Posterior cingulate gyrus (tissue), 11 donors: ENCODE measurements at regions of chr11 and their contacts with region 1.

Region 1: DNA sequence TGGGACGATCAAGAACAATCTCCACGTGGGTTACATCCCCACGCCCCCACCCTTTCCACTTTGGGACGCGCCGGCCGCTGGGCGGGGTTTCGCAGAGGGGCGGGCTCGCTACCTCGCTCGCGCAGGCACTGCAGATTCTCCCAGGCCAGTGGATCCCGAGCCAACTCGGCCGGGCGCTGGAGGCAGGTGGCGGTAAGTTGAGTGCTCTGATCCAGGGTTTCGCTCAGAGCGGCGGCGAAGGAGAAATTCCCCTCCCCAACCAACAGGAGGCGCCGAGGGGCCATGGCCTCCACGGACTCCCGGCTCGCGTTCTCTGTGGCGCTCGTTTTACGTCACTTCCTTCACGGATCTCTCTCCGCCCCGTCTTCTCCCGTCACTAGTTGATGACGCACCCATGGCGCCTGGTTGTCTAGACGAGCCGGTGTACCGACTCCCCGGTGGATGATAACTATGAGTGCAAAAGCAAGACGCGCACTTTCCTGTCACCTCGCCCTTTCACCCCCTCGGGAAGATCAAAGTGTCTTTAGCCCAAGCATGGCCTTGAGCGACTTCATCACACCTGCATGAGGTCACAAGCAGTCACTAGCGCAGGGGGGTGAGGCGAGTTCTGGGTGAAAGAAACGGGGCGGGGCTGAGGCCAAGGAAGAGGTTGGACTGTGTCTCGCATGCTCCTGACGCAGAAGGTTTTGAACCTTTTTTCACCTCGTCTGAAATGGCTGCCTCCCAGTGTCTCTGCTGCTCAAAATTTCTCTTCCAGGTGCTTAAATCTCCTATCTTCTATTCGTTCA is at the starts of genes CFAP68 and FDXACB1:
- DNase-seq: peak; percentile 94 to 99 (median 97)

Region 2: DNA sequence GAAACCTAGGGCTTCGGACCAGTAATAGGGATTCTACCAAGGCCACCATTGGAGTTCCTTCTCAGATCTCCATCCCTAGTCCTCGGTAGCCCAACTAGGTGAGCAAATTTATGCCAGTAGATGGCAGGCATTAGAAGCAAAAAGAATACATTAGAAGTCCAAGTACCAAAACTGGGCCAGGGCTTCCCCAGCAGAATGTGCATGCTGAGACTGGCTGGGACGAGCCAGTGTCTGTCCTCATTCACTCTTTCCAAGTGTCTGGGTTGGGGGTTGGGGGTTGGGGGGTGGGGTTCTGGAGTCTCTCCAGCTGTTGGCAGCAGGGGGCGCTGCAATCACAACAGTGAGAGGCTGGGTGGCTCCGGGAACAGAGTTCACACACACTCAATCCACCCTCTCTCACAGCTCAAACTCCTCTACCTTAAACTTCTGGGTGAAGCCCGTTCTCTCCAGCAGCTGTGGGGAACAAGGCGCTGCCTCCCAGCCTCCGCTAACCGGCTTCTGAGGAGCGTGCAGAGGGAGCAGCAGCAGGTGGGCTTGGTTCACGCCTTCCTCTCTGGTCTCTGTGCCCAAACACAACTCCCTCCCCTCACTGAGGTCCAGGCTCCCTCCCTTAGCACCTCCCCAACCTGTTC is 424.4 kb before region 1 on chr11:
- intact Hi-C with region 1: no loop called
- DNase-seq: peak in 9 of 10 donors; percentile 39 to 92 (median 77)

Region 3: DNA sequence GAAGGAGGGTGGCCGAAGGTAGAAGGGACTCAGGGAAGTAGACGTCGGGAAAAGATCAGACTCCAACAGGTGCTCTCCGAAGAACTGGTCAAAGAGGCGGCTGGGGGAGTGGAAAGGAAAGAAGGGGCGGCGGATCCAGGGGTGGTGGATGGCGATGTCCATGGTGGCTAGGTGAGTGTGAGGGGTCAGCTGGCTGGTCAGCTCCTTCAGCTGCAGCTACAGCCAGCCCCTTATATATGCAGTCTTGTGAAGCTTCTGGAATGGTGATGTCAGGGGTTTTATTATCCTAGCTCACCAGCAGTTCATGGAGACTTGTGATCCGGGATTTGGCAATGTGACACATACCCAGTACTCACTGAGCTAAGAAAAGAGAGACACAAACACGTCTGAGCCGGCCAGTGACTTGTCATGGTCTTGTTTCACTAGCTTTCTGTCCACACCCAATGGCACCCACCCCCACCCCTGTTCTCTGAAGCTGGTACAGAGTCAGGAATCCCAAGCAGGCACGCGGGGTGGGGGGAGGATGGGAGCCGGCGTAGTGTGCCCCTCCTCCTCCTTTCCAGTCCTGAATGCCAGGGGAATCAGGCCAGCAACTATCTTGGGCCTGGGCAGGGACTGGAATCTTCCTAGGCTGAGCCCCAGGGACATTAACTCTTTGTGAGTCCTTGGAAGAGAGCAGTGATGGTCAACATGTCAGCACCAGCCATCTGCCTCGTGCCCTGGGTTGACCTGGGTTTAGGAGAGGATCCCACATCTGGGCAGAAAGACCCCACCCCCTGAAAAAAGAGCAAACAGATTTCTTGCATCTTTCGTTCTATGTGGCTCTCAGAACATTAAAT is 32.7 kb after region 1 on chr11 and contains the start of gene CRYAB:
- intact Hi-C with region 1: loop called (anchors 5 kb)
- DNase-seq: peak; percentile 86 to 98 (median 91)

Region 4: DNA sequence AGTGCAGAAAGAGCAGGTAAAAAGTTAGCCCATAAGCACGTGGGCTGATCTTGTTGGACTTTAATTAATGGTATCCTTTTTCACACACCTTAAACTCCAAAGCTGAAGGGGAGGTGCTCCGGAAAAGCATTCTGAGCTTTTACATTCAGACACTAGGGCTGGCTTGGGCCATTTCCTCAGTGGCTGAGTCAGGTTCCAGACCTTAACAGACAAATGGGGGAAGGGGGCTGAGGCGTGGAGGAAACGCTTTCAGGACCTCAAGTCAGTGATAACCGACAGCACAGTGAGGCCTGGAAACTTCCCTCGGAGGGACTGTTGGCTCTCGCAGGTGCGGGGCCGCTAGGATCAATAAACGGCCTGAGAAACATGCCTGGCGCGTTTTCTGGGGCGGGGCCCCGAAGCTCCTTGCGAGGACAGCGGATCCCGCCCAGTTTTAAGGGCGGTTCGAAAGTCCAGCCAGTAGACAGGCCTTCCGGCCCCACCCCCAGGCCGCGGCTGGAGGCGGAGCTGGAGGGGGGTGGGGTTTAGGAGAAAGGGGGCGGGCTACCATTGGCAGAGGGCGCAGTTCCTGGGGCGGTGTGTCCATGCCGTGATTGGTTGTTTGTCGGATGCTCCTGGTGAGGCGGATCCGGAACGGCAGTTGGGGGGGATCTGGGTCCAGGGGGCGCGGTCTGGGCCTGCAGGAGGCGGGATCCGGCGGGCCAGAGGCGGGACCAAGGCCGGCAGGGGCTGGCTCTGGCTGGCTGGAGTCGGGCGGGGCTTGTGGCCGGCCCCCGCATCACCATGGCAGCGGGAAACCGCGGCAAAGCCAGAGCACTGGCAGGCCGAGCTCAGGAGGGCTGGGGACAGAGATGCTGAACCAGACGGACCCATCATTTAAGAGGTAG is 47.7 kb after region 1 on chr11:
- intact Hi-C with region 1: loop called (anchors 5 kb)
- DNase-seq: peak; percentile 93 to 100 (median 98)

Region 5: GRCh38 chr11:111977146-111978027 is 98.3 kb after region 1 on chr11:
- intact Hi-C with region 1: loop called (anchors 5 kb)
- DNase-seq: peak; percentile 62 to 94 (median 75)

Region 6: DNA sequence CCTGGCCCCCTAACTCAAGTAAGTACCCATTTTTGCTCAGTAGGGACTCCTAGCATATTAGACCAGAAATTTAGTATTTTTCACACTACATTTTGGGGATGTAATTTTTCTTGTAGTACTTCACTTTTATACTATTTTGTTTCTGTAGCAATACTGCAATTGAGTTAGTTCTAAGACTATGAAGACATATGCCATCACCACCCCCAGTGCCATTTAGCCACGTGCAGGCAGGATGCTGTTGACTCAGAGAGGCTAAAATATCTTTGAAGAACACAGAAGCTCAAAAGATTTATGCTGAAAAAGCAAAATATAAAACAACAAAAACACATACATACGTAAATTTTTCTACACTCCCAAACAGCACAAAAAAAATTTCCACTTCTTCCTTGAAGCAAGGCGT is 117.1 kb after region 1 on chr11:
- intact Hi-C with region 1: loop called (anchors 1 kb)
- DNase-seq: no peak

Region 7: DNA sequence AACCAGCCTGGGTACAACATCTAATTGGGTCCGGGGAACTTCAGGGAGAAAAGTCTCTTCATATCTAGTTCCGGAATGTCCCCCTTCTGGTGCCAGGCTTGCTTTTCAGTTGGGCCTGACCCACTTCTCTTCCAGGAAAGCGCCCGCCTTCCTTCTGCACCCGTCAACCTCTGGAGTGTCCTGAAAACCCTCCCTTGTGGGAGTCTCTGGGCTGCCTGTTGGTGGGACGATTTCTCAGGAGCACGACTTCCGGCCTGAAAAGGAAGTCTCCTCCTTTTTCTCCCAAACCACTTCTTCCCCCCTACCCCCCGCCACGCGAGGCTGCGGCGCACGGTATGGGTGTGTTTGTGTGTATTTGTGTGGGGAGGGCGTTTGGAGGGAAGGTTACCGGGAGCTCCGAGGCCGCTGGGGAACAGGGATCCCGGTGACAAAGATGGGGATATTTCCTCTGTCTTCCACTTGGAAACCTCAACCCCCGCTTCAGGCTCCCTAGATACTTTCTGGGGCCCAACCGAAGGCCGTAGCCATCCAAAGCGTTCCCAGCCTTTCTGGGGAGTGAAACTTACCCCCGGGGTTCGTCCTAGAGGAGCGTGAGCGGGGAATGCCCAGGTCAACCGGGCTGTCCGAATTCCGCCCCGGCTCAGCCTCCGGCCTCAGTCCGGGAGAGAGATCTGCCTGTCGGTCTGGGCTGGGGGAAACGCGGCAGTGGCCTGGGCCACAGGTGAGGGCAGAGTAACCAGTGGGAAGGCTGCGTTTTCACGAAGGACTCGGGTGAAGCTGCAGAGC is 195.2 kb after region 1 on chr11 and contains the start of gene NKAPD1:
- intact Hi-C with region 1: loop called (anchors 5 kb)
- DNase-seq: peak; percentile 67 to 96 (median 76)